ENCODE measurements at regions of chr10 and their contacts with region 1.

Region 1: DNA sequence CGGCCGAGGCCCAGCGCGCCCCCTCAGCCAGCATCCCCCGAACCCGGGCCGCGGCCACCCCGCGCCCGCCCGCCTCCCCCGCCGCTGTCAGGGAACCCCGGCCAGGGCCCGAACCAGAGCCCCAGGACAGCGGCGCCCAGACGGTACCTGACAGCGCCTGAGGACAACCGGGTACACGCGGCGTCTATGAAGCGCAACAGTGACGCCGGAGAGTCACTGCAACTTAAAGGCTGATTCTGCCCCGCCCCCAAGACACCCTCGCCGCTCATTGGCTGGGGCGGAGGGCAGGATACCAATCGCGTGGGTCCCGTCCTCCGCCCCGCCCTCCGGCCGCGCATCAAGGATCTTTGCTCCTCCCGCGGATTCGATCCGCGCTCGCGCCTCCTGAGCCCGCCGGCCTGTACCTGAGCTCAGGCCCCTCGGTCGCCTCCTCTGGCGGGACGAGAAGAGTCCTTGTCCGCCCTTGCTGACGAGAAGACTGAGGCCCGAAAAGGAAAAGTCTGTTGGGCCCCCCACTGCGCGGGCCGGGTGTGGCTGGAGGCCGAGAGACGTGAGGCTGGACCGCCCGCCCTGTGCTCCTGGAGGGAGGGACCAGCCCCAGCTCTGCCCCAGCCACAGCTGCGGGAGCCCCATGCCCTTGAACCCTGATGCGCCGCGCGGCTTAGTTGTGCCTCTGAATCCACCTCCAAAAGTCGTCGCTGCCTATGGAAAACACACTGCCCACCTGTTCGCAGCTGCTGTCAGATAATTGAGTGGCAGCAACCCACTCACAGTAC is at the start of gene OAT:
- DNase-seq: peak; percentile 93 to 98 (median 97)
- ATAC-seq: peak; percentile 98
- H3K4me3 ChIP-seq: peak within 1 kb of the TSS; percentile 66 to 68
- H3K4me3 Mint-ChIP-seq: peak within 1 kb of the TSS; percentile 85
- H3K27ac ChIP-seq: peak within 1 kb of the TSS; percentile 70
- H3K27ac Mint-ChIP-seq: peak within 1 kb of the TSS; percentile 83
- H3K4me1 ChIP-seq: peaks cover 14% of the 10 kb centered on the region
- H3K4me1 Mint-ChIP-seq: peaks cover 25% of the 10 kb centered on the region
- H3K27me3 ChIP-seq: no peaks in the 10 kb centered on the region
- H3K27me3 Mint-ChIP-seq: peaks cover 7% of the 10 kb centered on the region
- CTCF ChIP-seq: no peak
- total RNA-seq, gene OAT: 49.8 to 56.1 TPM

Region 2: GRCh38 chr10:123008439-123009205 is 1410.3 kb before region 1 on chr10 and contains the starts of genes ACADSB and IKZF5:
- CTCF ChIA-PET with region 1: no interaction called
- POLR2A ChIA-PET with region 1: no interaction called
- intact Hi-C with region 1: loop called (anchors 2 to 10 kb)
- DNase-seq: peak; percentile 92 to 99 (median 96)
- ATAC-seq: peak; percentile 89
- H3K4me3 ChIP-seq: peak within 1 kb of the TSS; percentile 89 to 100
- H3K4me3 Mint-ChIP-seq: peak within 1 kb of the TSS; percentile 97
- H3K27ac ChIP-seq: peak within 1 kb of the TSS; percentile 98 to 99
- H3K27ac Mint-ChIP-seq: peak within 1 kb of the TSS; percentile 99
- H3K4me1 ChIP-seq: peaks cover 48% of the 10 kb centered on the region
- H3K4me1 Mint-ChIP-seq: peaks cover 62% of the 10 kb centered on the region
- H3K27me3 ChIP-seq: no peaks in the 10 kb centered on the region
- H3K27me3 Mint-ChIP-seq: no peaks in the 10 kb centered on the region
- CTCF ChIP-seq: no peak
- total RNA-seq, gene ACADSB: 18.2 to 18.5 TPM
- total RNA-seq, gene IKZF5: 89.5 to 96.1 TPM

Region 3: DNA sequence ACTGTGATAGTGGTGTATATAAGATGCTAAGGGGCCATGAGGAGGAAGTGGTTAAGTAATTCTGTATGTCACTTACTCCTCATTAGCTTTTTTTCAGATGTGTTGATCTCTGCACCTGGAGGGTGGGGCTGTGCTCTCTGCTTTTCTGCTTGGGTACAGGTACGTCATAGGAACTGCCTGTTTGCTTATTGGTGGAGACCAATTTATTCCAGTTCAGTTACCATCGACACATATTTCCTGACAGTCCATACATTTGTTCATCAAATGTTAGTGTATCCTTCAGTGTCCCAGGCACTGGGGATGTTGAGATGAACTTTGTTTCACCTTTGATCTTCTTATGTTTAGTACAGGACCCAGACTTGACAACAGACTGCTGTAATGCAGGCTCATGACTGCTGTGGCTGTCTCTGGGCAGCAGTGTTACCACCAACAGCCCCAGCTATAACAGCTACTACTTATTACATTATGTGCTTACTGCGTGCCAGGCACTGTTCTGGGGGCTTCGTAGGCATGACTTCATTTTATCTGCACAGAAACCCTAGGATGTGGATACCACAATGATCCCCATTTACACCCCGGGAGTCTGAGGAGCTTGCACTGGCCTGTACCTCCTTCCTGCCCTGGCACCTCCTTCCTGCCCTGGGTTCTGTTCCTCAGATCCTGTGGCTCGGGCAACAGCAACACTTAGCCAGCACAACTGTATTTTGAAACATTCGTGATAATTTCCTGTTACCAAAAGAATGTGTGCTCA is 1177.3 kb before region 1 on chr10:
- CTCF ChIA-PET with region 1: no interaction called
- POLR2A ChIA-PET with region 1: no interaction called
- intact Hi-C with region 1: loop called in 1 of 2 experiments (anchors 5 kb)
- DNase-seq: peak; percentile 7 to 86 (median 57)
- ATAC-seq: peak; percentile 91
- H3K4me3 ChIP-seq: peak overlapping the region in 1 of 2 experiments; percentile 14
- H3K4me3 Mint-ChIP-seq: peak overlapping the region; percentile 59
- H3K27ac ChIP-seq: peak overlapping the region; percentile 90 to 92
- H3K27ac Mint-ChIP-seq: peak overlapping the region; percentile 99
- H3K4me1 ChIP-seq: peaks cover 24% of the 10 kb centered on the region
- H3K4me1 Mint-ChIP-seq: peaks cover 31% of the 10 kb centered on the region
- H3K27me3 ChIP-seq: no peaks in the 10 kb centered on the region
- H3K27me3 Mint-ChIP-seq: no peaks in the 10 kb centered on the region
- CTCF ChIP-seq: no peak

Region 4: DNA sequence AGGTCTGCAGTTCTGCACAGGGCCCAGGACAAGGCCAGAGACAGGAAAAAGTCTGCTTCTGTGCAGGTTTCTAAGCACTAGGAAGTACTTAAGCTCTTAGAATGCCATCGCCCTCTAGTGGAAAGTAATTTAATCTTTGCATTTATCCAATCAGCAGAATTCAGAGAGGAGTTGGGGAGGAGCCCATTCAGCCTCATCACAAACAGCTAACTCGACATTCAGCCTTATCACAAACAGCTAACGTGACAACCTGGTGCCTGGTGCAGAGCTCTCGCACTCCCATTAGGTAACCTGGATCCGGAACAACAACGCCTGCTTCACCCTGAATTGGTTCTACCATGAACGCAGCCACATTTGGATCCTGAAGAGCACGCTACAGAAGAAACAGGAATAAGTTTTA is 15.4 kb before region 1 on chr10:
- CTCF ChIA-PET with region 1: interaction called, 6 read pairs
- POLR2A ChIA-PET with region 1: interaction called, 3 read pairs
- intact Hi-C with region 1: loop called in 1 of 2 experiments (anchors 2 kb)
- DNase-seq: peak in 4 of 9 experiments; percentile 17 to 82 (median 55)
- ATAC-seq: peak; percentile 99
- H3K4me3 ChIP-seq: no peak overlapping the region
- H3K4me3 Mint-ChIP-seq: no peak overlapping the region
- H3K27ac ChIP-seq: peak overlapping the region in 1 of 2 experiments; percentile 38
- H3K27ac Mint-ChIP-seq: peak overlapping the region; percentile 46
- H3K4me1 ChIP-seq: no peaks in the 10 kb centered on the region
- H3K4me1 Mint-ChIP-seq: peaks cover 10% of the 10 kb centered on the region
- H3K27me3 ChIP-seq: no peaks in the 10 kb centered on the region
- H3K27me3 Mint-ChIP-seq: no peaks in the 10 kb centered on the region
- CTCF ChIP-seq: peak; percentile 56

Region 5: GRCh38 chr10:124461438-124462347 is 42.8 kb after region 1 on chr10 and contains the start of gene LHPP:
- CTCF ChIA-PET with region 1: no interaction called
- POLR2A ChIA-PET with region 1: interaction called, 7 read pairs
- intact Hi-C with region 1: loop called (anchors 1 kb)
- DNase-seq: peak; percentile 72 to 93 (median 86)
- ATAC-seq: peak; percentile 94
- H3K4me3 ChIP-seq: peak within 1 kb of the TSS; percentile 61 to 90
- H3K4me3 Mint-ChIP-seq: peak within 1 kb of the TSS; percentile 91
- H3K27ac ChIP-seq: peak within 1 kb of the TSS; percentile 37 to 79
- H3K27ac Mint-ChIP-seq: peak within 1 kb of the TSS; percentile 95
- H3K4me1 ChIP-seq: peaks cover 25% of the 10 kb centered on the region
- H3K4me1 Mint-ChIP-seq: peaks cover 32% of the 10 kb centered on the region
- H3K27me3 ChIP-seq: peaks cover 0 to under 1% of the 10 kb centered on the region in 2 experiments
- H3K27me3 Mint-ChIP-seq: peaks cover 4% of the 10 kb centered on the region
- CTCF ChIP-seq: peak; percentile 39
- total RNA-seq, gene LHPP: 14.4 to 17.3 TPM

Region 6: GRCh38 chr10:124588736-124589490 is 170.0 kb after region 1 on chr10:
- CTCF ChIA-PET with region 1: no interaction called
- POLR2A ChIA-PET with region 1: no interaction called
- intact Hi-C with region 1: no loop called
- DNase-seq: no peak
- ATAC-seq: no peak
- H3K4me3 ChIP-seq: no peak overlapping the region
- H3K4me3 Mint-ChIP-seq: no peak overlapping the region
- H3K27ac ChIP-seq: no peak overlapping the region
- H3K27ac Mint-ChIP-seq: no peak overlapping the region
- H3K4me1 ChIP-seq: no peaks in the 10 kb centered on the region
- H3K4me1 Mint-ChIP-seq: no peaks in the 10 kb centered on the region
- H3K27me3 ChIP-seq: no peaks in the 10 kb centered on the region
- H3K27me3 Mint-ChIP-seq: no peaks in the 10 kb centered on the region
- CTCF ChIP-seq: no peak

Region 7: DNA sequence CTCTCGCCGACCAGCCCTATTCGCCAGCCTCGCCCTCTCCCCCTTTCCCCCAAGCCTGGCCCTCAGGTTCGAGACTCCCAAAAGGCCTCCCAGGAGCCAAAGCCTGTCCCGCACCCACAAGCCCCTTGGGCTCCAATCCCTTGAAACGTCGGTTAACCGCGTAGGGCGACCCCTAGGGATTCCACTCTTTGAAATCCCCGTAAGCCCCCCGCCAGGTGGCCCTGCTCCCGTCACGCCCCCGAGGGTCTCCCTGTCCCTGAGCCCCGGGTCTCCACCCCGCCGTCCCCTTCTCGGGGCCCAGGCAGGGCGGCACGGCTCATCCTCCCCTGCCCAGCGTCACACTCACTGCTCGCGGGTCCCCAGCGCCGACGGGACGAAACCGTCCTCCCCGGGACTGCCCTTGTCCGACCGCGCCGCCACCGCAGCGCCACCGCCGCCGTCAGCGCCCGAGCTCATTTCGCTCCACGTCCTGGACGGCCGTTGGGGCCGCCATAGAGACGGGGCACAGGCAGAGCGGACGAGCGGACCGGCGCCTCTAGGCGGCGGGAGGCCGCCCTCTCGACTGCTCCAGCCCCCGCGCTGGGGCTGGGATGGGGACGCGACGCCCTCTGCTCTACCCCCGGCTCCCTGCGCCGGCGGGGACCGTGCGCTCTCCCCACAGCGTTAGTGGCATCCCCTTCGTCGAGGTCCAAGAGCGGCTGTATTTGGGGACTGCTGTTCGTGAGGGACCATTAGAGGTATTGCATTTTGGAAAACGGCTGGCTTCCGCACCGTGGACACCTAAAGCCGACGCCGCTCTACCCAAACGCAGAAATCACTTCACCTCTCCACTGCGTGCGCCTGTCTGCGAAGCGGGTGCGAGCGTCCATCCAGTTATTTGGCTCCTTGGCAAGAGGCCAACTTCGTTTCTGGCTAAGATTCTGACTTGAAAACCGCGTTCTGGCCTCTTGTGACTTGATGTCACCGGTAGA is 372.7 kb after region 1 on chr10 and contains the start of gene EEF1AKMT2:
- CTCF ChIA-PET with region 1: no interaction called
- POLR2A ChIA-PET with region 1: no interaction called
- intact Hi-C with region 1: loop called in 1 of 2 experiments (anchors 5 kb)
- DNase-seq: peak; percentile 72 to 90 (median 80)
- ATAC-seq: peak; percentile 94
- H3K4me3 ChIP-seq: peak within 1 kb of the TSS; percentile 75 to 93
- H3K4me3 Mint-ChIP-seq: peak within 1 kb of the TSS; percentile 98
- H3K27ac ChIP-seq: peak within 1 kb of the TSS; percentile 62 to 86
- H3K27ac Mint-ChIP-seq: peak within 1 kb of the TSS; percentile 96
- H3K4me1 ChIP-seq: peaks cover 11% of the 10 kb centered on the region
- H3K4me1 Mint-ChIP-seq: peaks cover 24% of the 10 kb centered on the region
- H3K27me3 ChIP-seq: no peaks in the 10 kb centered on the region
- H3K27me3 Mint-ChIP-seq: no peaks in the 10 kb centered on the region
- CTCF ChIP-seq: no peak
- total RNA-seq, gene EEF1AKMT2: 13.8 to 13.9 TPM

Region 8: DNA sequence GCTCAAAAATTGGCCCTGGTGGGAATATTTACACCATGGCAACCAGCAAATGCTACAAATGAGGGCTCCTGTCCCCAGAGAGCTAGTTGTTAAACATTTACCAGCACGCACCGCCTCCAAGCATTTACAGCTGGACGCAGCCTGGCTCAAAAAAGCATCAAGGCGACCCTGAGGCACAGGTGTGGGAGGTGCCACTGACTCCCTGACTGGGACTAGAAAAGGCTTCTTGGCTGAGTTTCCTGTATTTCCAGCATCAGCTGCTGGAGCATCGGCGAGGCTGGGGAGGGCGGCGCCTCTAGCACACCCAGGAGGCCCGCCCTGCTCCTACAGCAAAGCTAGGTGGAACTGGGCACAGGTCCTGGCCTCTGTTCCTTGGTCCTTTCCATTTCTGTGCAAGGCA is 479.6 kb after region 1 on chr10:
- CTCF ChIA-PET with region 1: no interaction called
- POLR2A ChIA-PET with region 1: no interaction called
- intact Hi-C with region 1: no loop called
- DNase-seq: no peak
- ATAC-seq: no peak
- H3K4me3 ChIP-seq: no peak overlapping the region
- H3K4me3 Mint-ChIP-seq: no peak overlapping the region
- H3K27ac ChIP-seq: no peak overlapping the region
- H3K27ac Mint-ChIP-seq: no peak overlapping the region
- H3K4me1 ChIP-seq: no peaks in the 10 kb centered on the region
- H3K4me1 Mint-ChIP-seq: no peaks in the 10 kb centered on the region
- H3K27me3 ChIP-seq: no peaks in the 10 kb centered on the region
- H3K27me3 Mint-ChIP-seq: peaks cover 14% of the 10 kb centered on the region
- CTCF ChIP-seq: no peak

Region 9: GRCh38 chr10:125822878-125823662 is 1404.2 kb after region 1 on chr10 and contains the starts of genes BCCIP and UROS:
- CTCF ChIA-PET with region 1: no interaction called
- POLR2A ChIA-PET with region 1: no interaction called
- intact Hi-C with region 1: loop called in 1 of 2 experiments (anchors 10 kb)
- DNase-seq: peak; percentile 80 to 96 (median 90)
- ATAC-seq: peak; percentile 87
- H3K4me3 ChIP-seq: peak within 1 kb of the TSS; percentile 79 to 92
- H3K4me3 Mint-ChIP-seq: no peak within 1 kb of the TSS
- H3K27ac ChIP-seq: peak within 1 kb of the TSS; percentile 90 to 96
- H3K27ac Mint-ChIP-seq: peak within 1 kb of the TSS; percentile 68
- H3K4me1 ChIP-seq: peaks cover 42% of the 10 kb centered on the region
- H3K4me1 Mint-ChIP-seq: peaks cover 39% of the 10 kb centered on the region
- H3K27me3 ChIP-seq: no peaks in the 10 kb centered on the region
- H3K27me3 Mint-ChIP-seq: no peaks in the 10 kb centered on the region
- CTCF ChIP-seq: no peak
- total RNA-seq, gene BCCIP: 41.3 to 42.0 TPM
- total RNA-seq, gene UROS: 17.7 to 20.7 TPM

Measured in CD8-positive, alpha-beta T cell (primary cell).